ENCODE measurements at regions of chr17 and their contacts with region 1.

Region 1: DNA sequence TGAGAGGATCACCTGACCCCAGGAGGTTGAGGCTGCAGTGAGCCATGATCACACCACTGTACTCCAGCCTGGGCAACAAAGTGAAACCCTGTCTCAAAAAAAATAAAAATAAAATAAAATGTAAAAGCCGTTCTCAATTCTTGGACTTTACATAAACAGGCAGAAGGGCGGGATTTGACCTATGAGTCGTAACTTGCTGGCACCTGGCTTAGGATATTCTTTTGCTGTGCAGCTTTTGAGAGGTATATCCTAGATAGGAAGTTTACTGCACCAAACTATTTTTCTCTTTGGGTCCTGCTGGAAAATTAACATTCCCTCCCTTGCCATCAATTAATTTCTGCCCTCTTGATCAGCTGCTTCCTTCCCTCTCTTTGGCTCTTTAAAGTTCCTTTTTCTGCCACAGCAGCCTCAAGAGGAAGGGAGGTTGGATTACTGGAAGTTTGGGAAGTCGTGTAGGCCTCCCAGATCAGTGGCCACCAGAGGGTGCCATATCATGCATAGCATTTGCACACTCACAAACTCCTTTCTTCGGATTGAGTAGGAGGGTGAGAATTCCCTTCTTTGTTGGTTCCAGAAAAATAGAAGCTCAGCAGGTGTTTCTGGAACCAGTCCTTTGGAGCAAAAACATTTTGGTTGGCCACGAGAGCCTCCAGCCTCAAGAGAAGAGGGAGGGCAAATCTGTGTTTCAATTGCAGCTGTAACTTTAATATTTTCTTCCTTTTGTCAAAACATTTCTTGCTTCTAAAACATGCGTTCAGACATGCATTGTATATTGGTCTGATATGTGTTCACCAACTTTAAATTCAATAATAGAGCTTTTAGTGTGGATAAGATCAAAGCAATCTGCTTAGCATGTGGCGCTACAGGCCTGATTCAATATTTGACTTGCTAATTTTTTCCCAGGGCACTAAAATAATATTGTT is 147.3 kb downstream of the CCDC182 start:
- DNase-seq: peak; percentile 47
- H3K4me3 Mint-ChIP-seq: no peak overlapping the region
- H3K27ac Mint-ChIP-seq: peak overlapping the region; percentile 96
- H3K4me1 Mint-ChIP-seq: peaks cover 55% of the 10 kb centered on the region
- H3K27me3 Mint-ChIP-seq: no peaks in the 10 kb centered on the region

Region 2: DNA sequence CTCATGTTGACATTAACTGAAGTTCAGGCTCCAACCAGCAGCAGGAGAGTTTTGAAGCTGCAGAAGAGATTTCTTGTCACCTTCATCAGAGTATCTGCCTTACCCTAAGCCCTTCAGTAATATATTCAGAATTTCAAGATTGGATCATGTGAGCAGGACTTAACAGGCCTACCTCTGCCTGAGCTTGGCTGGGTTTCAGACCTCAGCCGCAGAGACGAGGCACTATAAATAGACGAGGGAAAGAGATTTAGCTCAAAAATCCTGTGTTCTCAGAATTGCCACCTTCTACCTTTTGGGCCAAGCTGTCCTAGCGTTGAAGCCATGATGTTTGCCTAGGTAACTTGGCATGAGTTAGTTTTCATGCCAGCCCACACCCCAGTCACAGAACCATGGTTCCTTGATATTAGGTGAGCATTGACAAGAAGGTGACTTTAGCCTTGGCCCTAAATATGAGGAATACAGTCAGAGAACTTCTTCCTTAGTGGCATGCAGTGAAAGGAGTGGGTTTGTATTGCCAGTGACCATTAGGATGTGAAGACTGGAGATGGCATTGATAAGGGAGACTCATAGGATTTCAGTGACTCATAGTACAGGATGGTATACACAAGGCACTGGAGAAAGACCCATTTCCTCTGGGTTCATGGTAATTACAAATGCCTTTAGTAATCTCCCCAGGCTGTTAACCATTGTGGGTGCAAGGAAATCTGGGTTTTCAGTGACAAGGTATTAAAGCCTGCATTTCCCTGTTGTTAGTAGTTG is 117.2 kb before region 1 on chr17:
- CTCF ChIA-PET with region 1: no interaction called
- POLR2A ChIA-PET with region 1: no interaction called
- DNase-seq: no peak
- H3K4me3 Mint-ChIP-seq: no peak overlapping the region
- H3K27ac Mint-ChIP-seq: no peak overlapping the region
- H3K4me1 Mint-ChIP-seq: peaks cover 25% of the 10 kb centered on the region
- H3K27me3 Mint-ChIP-seq: no peaks in the 10 kb centered on the region

Region 3: DNA sequence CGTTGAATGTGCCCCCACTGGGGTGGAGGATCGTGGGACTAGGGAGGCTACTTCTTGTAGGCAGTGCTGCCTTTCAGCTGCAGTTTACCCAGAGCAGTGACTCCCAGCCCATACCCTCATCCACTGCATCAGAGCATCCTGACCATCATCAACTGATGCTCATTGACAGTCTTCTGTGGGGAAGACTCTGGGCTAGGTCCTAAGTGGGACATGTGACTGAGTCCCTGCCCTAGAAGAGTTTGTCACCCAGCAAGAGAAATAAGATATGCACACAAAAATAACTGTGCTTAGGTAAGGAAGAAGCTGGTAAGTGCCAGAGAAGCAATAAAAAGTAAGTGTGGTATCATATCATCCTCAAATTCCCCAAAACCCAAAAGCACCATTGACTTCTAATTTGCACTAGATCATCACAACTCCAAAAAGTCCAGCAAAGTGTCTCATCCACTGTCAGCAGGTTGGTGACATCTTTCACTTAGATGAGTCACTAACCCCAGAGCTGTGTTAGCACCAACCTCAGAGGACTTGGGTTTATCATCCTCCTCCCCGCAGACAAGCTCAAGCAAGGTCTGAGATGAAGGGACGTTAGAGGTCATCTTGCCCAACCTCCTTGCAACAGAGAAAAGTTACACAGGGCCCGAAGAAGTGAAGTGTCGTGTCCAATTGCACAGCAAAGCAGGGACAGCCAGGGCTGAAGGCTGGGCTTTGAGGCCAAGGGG is 48.3 kb after region 1 on chr17:
- CTCF ChIA-PET with region 1: interaction called, 11 read pairs
- POLR2A ChIA-PET with region 1: interaction called, 3 read pairs
- DNase-seq: peak; percentile 29
- H3K4me3 Mint-ChIP-seq: no peak overlapping the region
- H3K27ac Mint-ChIP-seq: peak overlapping the region; percentile 68
- H3K4me1 Mint-ChIP-seq: peaks cover 13% of the 10 kb centered on the region
- H3K27me3 Mint-ChIP-seq: no peaks in the 10 kb centered on the region

Region 4: GRCh38 chr17:57671667-57672632 is 74.2 kb after region 1 on chr17:
- CTCF ChIA-PET with region 1: interaction called, 122 read pairs
- POLR2A ChIA-PET with region 1: interaction called, 9 read pairs
- DNase-seq: peak; percentile 77
- H3K4me3 Mint-ChIP-seq: no peak overlapping the region
- H3K27ac Mint-ChIP-seq: peak overlapping the region; percentile 82
- H3K4me1 Mint-ChIP-seq: peaks cover 31% of the 10 kb centered on the region
- H3K27me3 Mint-ChIP-seq: no peaks in the 10 kb centered on the region

Region 5: GRCh38 chr17:57739402-57740392 is 141.9 kb after region 1 on chr17:
- CTCF ChIA-PET with region 1: interaction called, 14 read pairs
- POLR2A ChIA-PET with region 1: no interaction called
- DNase-seq: no peak
- H3K4me3 Mint-ChIP-seq: no peak overlapping the region
- H3K27ac Mint-ChIP-seq: no peak overlapping the region
- H3K4me1 Mint-ChIP-seq: peaks cover 7% of the 10 kb centered on the region
- H3K27me3 Mint-ChIP-seq: peaks cover 8% of the 10 kb centered on the region